ENCODE measurements at regions of chr10 and their contacts with region 1.

Region 1: DNA sequence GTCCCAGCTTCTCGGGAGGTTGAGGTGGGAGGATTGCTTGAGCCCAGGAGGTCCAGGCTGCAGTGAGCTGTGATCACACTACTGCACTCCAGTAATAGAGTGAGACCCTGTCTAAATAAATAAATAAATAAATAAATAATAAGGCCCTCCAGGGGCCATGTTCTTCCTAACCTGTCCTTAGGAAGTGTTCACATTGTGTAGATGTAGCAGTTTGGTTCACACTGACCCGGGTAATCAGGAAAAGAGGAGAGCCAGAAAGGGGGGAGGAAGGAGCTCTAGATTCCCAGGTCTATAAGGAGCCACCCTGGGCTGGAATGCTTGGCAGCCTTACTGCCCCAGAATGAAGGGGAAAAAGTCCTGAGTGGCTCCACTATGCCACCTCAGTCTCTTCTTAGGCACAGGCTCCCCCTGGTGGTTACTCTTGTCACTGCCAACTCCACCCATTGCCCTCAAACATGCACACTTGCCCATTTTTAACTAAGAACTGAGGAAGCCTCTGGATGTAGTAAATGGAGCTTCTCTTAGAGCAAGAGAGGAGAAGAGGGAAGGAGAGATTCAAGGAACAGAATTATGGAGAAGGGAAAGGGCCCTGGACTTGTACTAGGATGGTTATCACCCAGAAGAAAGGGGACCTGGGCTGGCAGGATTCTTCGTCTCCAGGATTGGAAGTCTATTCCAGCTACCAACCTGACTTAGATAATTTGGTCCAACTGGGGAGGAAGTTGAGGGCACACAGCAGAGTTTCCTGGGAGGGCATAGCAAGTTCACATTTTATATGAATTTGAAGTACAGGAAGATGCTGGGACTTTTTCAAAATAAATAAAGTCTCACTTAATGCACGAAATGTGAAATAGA is 7.8 kb downstream of the HPS6 start:
- DNase-seq: peak; percentile 86
- H3K4me3 Mint-ChIP-seq: no peak overlapping the region
- H3K27ac Mint-ChIP-seq: no peak overlapping the region
- H3K4me1 Mint-ChIP-seq: peaks cover 1% of the 10 kb centered on the region
- H3K27me3 Mint-ChIP-seq: no peaks in the 10 kb centered on the region

Region 2: GRCh38 chr10:102055647-102056419 is 17.1 kb before region 1 on chr10 and contains the start of gene ARMH3:
- CTCF ChIA-PET with region 1: interaction called, 19 read pairs
- POLR2A ChIA-PET with region 1: no interaction called
- DNase-seq: peak; percentile 95
- H3K4me3 Mint-ChIP-seq: peak within 1 kb of the TSS; percentile 98
- H3K27ac Mint-ChIP-seq: peak within 1 kb of the TSS; percentile 98
- H3K4me1 Mint-ChIP-seq: peaks cover 42% of the 10 kb centered on the region
- H3K27me3 Mint-ChIP-seq: no peaks in the 10 kb centered on the region
- total RNA-seq, gene ARMH3: 22.1 to 23.6 TPM

Region 3: GRCh38 chr10:102085336-102085735 is 12.4 kb after region 1 on chr10:
- CTCF ChIA-PET with region 1: interaction called, 13 read pairs
- POLR2A ChIA-PET with region 1: no interaction called
- DNase-seq: no peak
- H3K4me3 Mint-ChIP-seq: no peak overlapping the region
- H3K27ac Mint-ChIP-seq: no peak overlapping the region
- H3K4me1 Mint-ChIP-seq: no peaks in the 10 kb centered on the region
- H3K27me3 Mint-ChIP-seq: no peaks in the 10 kb centered on the region

Region 4: GRCh38 chr10:102114861-102115618 is 42.1 kb after region 1 on chr10:
- CTCF ChIA-PET with region 1: interaction called, 17 read pairs
- POLR2A ChIA-PET with region 1: interaction called, 3 read pairs
- DNase-seq: peak; percentile 90
- H3K4me3 Mint-ChIP-seq: peak overlapping the region; percentile 76
- H3K27ac Mint-ChIP-seq: peak overlapping the region; percentile 94
- H3K4me1 Mint-ChIP-seq: peaks cover 63% of the 10 kb centered on the region
- H3K27me3 Mint-ChIP-seq: no peaks in the 10 kb centered on the region